Activated T-helper 1 cell treated with anti-CD3 and anti-CD28 coated beads, Interleukin-12 subunit alpha, Interleukin-12 subunit beta, Interleukin-2, Interleukin-4 antibody, amounts not matched to agents 30 ng/mL and 10 ng/mL and 1 ng/mL, durations not matched to agents 14 hours and 24 hours and 36 hours (primary cell): ENCODE measurements at regions of chr2 and their contacts with region 1.

Region 1: GRCh38 chr2:156400706-156401678 is 35.2 kb upstream of the GPD2 start:
- DNase-seq: peak; percentile 70
- H3K4me3 Mint-ChIP-seq: peak overlapping the region; percentile 95
- H3K27ac Mint-ChIP-seq: peak overlapping the region; percentile 91
- H3K4me1 Mint-ChIP-seq: peaks cover 37% of the 10 kb centered on the region
- H3K27me3 Mint-ChIP-seq: peaks cover 4% of the 10 kb centered on the region

Region 2: DNA sequence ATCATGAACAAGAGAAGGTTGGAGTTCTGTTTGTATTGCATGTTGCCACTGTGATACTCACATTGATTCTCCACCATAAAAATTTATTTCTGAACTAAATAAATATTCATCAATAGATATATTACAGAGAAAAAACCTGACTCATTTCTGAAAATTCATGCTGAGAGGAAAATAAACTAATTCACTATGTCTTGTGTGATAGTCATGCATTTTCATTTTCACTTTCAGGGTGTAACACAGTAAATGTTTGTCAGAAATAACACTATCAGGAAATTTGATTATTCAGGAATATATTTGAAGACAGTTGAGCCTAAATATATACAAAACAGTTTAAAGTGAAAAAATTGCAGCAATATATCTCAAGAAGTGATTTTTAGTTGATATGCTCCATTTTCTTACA is 1367.3 kb before region 1 on chr2:
- intact Hi-C with region 1: no loop called
- DNase-seq: no peak
- H3K4me3 Mint-ChIP-seq: no peak overlapping the region
- H3K27ac Mint-ChIP-seq: no peak overlapping the region
- H3K4me1 Mint-ChIP-seq: no peaks in the 10 kb centered on the region
- H3K27me3 Mint-ChIP-seq: no peaks in the 10 kb centered on the region

Region 3: GRCh38 chr2:156165742-156166141 is 235.2 kb before region 1 on chr2:
- intact Hi-C with region 1: no loop called
- DNase-seq: no peak
- H3K4me3 Mint-ChIP-seq: no peak overlapping the region
- H3K27ac Mint-ChIP-seq: no peak overlapping the region
- H3K4me1 Mint-ChIP-seq: no peaks in the 10 kb centered on the region
- H3K27me3 Mint-ChIP-seq: no peaks in the 10 kb centered on the region

Region 4: GRCh38 chr2:156380117-156380645 is 20.8 kb before region 1 on chr2:
- intact Hi-C with region 1: loop called (anchors 1 kb)
- DNase-seq: no peak
- H3K4me3 Mint-ChIP-seq: no peak overlapping the region
- H3K27ac Mint-ChIP-seq: peak overlapping the region; percentile 73
- H3K4me1 Mint-ChIP-seq: peaks cover 45% of the 10 kb centered on the region
- H3K27me3 Mint-ChIP-seq: no peaks in the 10 kb centered on the region

Region 5: GRCh38 chr2:156385242-156385641 is 15.8 kb before region 1 on chr2:
- intact Hi-C with region 1: loop called (anchors 1 kb)
- DNase-seq: no peak
- H3K4me3 Mint-ChIP-seq: no peak overlapping the region
- H3K27ac Mint-ChIP-seq: peak overlapping the region; percentile 75
- H3K4me1 Mint-ChIP-seq: peaks cover 37% of the 10 kb centered on the region
- H3K27me3 Mint-ChIP-seq: peaks cover 4% of the 10 kb centered on the region

Region 6: DNA sequence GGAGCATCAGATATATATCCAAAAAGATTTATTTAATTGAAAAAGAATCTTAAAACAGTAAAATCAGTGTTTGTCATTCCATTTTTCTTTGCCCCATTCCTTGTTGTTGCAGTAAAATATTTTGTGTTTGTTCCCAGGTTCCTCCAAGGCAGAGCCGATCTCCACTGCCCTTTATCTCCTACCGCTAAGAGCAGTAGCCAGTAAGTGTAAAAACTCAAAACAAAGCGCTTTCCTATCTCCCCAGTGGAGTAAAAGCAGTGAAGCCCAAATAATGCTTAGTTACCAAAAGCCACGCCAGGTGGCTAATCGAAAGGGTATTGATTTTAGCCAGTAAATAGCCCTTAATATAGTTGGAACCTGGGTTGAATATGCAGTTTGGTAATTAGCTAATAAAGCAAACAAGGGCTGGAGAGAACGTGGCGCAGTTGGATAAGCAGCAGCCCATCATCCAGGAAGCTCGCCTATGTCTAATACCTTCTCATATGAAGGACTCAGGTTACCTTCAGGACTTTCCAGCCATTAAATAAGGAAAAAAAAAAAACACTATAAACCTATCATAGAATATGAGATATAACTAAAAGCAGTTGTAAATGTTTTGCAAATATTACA is 22.8 kb after region 1 on chr2:
- intact Hi-C with region 1: no loop called
- DNase-seq: no peak
- H3K4me3 Mint-ChIP-seq: no peak overlapping the region
- H3K27ac Mint-ChIP-seq: no peak overlapping the region
- H3K4me1 Mint-ChIP-seq: peaks cover 9% of the 10 kb centered on the region
- H3K27me3 Mint-ChIP-seq: peaks cover 19% of the 10 kb centered on the region

Region 7: GRCh38 chr2:156435715-156436496 is 34.9 kb after region 1 on chr2 and contains the start of gene GPD2:
- intact Hi-C with region 1: loop called (anchors 1 kb)
- DNase-seq: peak; percentile 56
- H3K4me3 Mint-ChIP-seq: peak within 1 kb of the TSS; percentile 92
- H3K27ac Mint-ChIP-seq: peak within 1 kb of the TSS; percentile 98
- H3K4me1 Mint-ChIP-seq: peaks cover 34% of the 10 kb centered on the region
- H3K27me3 Mint-ChIP-seq: peaks cover 2% of the 10 kb centered on the region
- total RNA-seq, gene GPD2: 15.7 and 18.1 TPM in 2 replicates

Region 8: GRCh38 chr2:156476850-156477206 is 75.8 kb after region 1 on chr2:
- intact Hi-C with region 1: loop called (anchors 1 kb)
- DNase-seq: peak; percentile 11
- H3K4me3 Mint-ChIP-seq: peak overlapping the region; percentile 76
- H3K27ac Mint-ChIP-seq: peak overlapping the region; percentile 92
- H3K4me1 Mint-ChIP-seq: peaks cover 69% of the 10 kb centered on the region
- H3K27me3 Mint-ChIP-seq: no peaks in the 10 kb centered on the region

Region 9: GRCh38 chr2:156526950-156527636 is 126.1 kb after region 1 on chr2:
- intact Hi-C with region 1: loop called (anchors 2 kb)
- DNase-seq: no peak
- H3K4me3 Mint-ChIP-seq: no peak overlapping the region
- H3K27ac Mint-ChIP-seq: no peak overlapping the region
- H3K4me1 Mint-ChIP-seq: peaks cover 5% of the 10 kb centered on the region
- H3K27me3 Mint-ChIP-seq: no peaks in the 10 kb centered on the region